ENCODE measurements at regions of chr3 and their contacts with region 1.

Region 1: GRCh38 chr3:170102431-170102830 is 64.6 kb downstream of the GPR160 start:
- DNase-seq: no peak
- H3K4me3 ChIP-seq: no peak overlapping the region
- H3K27ac ChIP-seq: no peak overlapping the region
- H3K4me1 ChIP-seq: no peaks in the 10 kb centered on the region
- H3K27me3 ChIP-seq: no peaks in the 10 kb centered on the region
- CTCF ChIP-seq: no peak

Region 2: GRCh38 chr3:170154569-170155143 is 52.2 kb after region 1 on chr3:
- CTCF ChIA-PET with region 1: no interaction called
- dilution Hi-C with region 1: loop called (anchors 5 kb)
- in situ Hi-C with region 1: no loop called
- intact Hi-C with region 1: no loop called
- DNase-seq: no peak
- H3K4me3 ChIP-seq: no peak overlapping the region
- H3K27ac ChIP-seq: no peak overlapping the region
- H3K4me1 ChIP-seq: no peaks in the 10 kb centered on the region
- H3K27me3 ChIP-seq: no peaks in the 10 kb centered on the region
- CTCF ChIP-seq: no peak